Prostate gland (tissue), 2 donors: ENCODE measurements at regions of chrX and their contacts with region 1.

Region 1: GRCh38 chrX:136168929-136169735 is 21.8 kb downstream of the FHL1 start:
- DNase-seq: no peak
- H3K4me3 ChIP-seq: no peak overlapping the region
- H3K27ac ChIP-seq: no peak overlapping the region
- H3K4me1 ChIP-seq: no peaks in the 10 kb centered on the region
- H3K27me3 ChIP-seq: no peaks in the 10 kb centered on the region
- CTCF ChIP-seq: no peak
- POLR2A ChIP-seq: no peak

Region 2: DNA sequence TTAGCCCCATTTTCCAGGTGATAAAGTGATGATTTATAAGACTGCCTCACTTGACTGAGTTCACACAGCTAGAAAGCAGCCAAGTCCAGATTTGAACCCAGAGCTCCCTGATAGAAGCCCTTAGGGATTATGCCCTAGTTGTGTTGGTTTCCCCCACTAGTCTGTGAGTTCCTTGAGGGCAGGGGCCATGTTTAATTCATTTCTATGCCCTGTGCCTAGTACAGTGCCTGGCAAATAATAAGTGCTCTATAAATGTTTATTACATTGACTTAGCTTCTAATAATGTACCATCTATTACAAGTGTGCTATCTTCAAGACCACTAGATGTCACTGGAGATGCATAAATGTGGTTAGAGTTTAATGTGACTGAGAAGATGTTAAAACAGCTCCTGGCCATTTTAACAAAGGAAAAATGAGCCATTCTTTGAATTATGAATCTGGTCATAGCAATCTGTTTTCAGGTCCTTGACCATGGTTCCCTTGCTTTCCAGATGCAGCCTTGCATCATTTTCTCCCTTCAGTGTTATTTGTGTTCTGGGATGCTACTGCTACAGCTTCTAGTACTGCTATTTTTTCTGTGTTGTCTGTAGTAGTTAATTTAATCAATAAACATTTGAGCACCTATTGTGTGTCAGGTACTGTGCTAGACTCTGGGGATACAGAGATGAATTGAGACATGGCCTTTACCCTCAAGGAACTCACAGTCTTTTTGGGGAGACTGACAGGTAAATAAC is 140.7 kb before region 1 on chrX:
- intact Hi-C with region 1: loop called (anchors 5 kb)
- DNase-seq: peak; percentile 4
- H3K4me3 ChIP-seq: no peak overlapping the region
- H3K27ac ChIP-seq: no peak overlapping the region
- H3K4me1 ChIP-seq: no peaks in the 10 kb centered on the region
- H3K27me3 ChIP-seq: no peaks in the 10 kb centered on the region
- CTCF ChIP-seq: peak in 3 of 4 experiments; percentile 50 to 68 (median 62)
- POLR2A ChIP-seq: no peak

Region 3: GRCh38 chrX:136055651-136056221 is 113.4 kb before region 1 on chrX:
- intact Hi-C with region 1: loop called (anchors 5 kb)
- DNase-seq: no peak
- H3K4me3 ChIP-seq: no peak overlapping the region
- H3K27ac ChIP-seq: no peak overlapping the region
- H3K4me1 ChIP-seq: no peaks in the 10 kb centered on the region
- H3K27me3 ChIP-seq: no peaks in the 10 kb centered on the region
- CTCF ChIP-seq: no peak
- POLR2A ChIP-seq: no peak

Region 4: DNA sequence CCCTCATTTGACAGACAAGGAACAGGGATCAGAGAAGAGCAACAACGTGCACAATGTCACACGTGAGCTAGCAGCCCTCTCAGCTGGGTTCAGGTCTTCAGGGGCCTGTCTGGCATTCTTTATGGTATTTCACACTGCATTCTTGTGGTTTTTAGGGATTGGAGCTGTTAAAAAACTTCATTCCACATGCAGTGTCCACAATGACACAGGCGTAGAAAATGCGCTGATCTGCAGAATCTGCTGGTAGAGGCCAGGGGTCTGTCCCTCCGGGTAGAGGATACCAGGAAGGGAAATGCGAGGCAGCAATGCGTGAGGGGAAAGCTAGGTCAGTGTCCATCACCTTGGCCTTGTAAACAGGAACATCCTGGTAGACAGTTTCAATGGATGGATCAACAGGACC is 45.4 kb after region 1 on chrX:
- intact Hi-C with region 1: loop called (anchors 5 kb)
- DNase-seq: no peak
- H3K4me3 ChIP-seq: no peak overlapping the region
- H3K27ac ChIP-seq: no peak overlapping the region
- H3K4me1 ChIP-seq: no peaks in the 10 kb centered on the region
- H3K27me3 ChIP-seq: no peaks in the 10 kb centered on the region
- CTCF ChIP-seq: no peak
- POLR2A ChIP-seq: no peak

Region 5: DNA sequence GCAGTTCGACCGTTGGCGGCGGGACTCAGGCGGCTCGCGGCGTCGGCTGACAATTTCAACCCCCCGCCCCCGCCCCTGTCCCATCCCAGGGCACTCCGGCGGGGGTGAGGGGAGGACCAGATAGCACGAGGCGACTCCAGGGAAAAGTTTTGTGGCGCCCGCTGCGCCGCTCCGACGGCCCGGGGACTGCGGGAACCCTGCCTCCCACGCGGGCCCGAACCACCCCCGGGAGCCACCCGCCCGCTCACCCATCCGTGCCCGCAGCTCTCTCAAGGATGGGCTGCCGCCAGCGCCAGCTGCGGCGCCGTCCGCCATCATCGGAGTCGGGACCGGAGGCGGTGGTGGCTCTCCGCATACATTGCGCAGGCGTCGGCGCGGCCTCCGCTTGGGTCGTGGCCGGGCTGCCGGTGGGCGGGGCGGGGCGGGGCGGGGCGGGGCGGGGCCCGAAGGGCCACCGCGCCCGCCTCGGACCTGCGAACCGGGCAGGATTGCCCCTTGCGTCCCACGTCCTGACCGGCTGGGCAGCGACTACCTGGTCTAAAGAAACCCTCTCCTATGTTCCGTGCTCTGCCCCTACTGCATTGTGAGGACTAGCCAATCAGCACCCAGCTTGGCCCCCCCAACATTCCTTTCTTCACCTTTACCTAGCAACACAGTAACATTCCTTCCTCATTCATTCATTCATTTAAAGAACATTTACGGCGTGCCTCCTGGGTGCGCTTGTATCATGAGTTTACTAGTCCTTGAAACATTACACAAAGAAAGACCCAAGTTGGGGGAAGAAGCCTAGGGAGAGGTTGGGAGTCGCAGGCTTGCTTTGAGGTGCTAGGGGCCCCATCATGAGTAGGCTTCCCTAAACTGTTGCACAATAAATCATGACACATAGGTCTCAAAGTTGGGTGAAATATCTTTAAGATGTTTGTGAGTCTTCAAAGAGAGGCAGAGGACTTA is 82.2 kb after region 1 on chrX and contains the start of gene MAP7D3:
- intact Hi-C with region 1: loop called (anchors 5 kb)
- DNase-seq: peak; percentile 18
- H3K4me3 ChIP-seq: peak within 1 kb of the TSS; percentile 44 to 47
- H3K27ac ChIP-seq: peak within 1 kb of the TSS in 1 of 2 donors; percentile 51
- H3K4me1 ChIP-seq: no peaks in the 10 kb centered on the region
- H3K27me3 ChIP-seq: no peaks in the 10 kb centered on the region
- CTCF ChIP-seq: no peak
- POLR2A ChIP-seq: no peak
- total RNA-seq, gene MAP7D3: 6.1 to 22.8 TPM